Endothelial cell of umbilical vein (primary cell): ENCODE measurements at regions of chr12 and their contacts with region 1.

Region 1: DNA sequence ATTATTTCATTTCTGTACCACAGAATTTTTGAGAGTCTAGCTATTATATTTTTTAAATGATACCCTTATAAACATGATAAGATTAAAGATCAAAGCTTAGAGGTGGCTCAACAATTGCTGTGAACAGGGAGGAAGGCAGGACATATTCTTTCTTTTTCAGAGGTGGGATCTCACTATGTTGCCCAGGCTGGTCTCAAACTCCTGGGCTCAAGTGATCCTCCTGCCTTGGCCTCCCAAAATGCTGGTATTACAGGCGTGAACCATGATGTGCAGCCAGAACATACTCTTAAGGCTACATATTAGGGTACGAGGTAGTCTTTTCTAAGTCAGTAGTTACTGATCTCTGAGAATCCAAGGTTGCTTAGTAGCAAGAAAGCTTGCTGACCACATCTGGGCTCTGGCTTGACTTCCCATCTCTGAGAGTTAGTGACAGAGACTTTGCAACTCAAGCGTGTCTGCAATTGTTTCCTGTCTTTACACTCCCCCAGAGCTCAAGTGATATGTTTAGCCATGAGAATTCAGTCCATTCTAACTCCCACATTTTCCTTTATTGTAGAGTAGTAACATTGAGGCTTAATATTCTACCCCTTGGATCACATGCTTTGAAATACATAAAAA is 8.6 kb downstream of the RAB5B start:
- DNase-seq: no peak
- H3K4me3 ChIP-seq: no peak overlapping the region
- H3K27ac ChIP-seq: no peak overlapping the region
- H3K4me1 ChIP-seq: peaks cover 5% of the 10 kb centered on the region
- H3K27me3 ChIP-seq: no peaks in the 10 kb centered on the region
- CTCF ChIP-seq: no peak
- POLR2A ChIP-seq: no peak

Region 2: DNA sequence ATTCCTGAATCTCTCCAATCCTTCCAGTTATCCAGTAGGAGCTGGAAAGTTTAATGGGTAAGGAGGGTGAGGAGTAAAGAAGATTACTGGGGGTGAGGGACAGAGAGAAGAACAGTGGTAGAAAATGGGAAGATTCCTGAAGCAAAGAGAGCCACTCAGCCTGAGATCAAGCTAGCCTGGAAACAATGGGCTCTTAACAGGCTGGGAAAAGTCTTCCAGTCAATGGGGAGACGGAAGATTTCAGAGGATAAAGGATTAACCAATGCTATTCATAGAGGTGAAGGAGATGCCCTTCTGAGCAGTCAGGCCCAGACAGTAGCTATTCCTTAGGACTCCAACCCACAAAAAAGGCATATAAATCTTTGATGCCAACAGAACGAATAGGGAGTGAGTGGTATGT is 224.7 kb before region 1 on chr12:
- CTCF ChIA-PET with region 1: no interaction called
- POLR2A ChIA-PET with region 1: no interaction called
- dilution Hi-C with region 1: loop called (anchors 10 kb)
- intact Hi-C with region 1: no loop called
- DNase-seq: no peak
- H3K4me3 ChIP-seq: no peak overlapping the region
- H3K27ac ChIP-seq: no peak overlapping the region
- H3K4me1 ChIP-seq: no peaks in the 10 kb centered on the region
- H3K27me3 ChIP-seq: no peaks in the 10 kb centered on the region
- CTCF ChIP-seq: no peak
- POLR2A ChIP-seq: no peak

Region 3: GRCh38 chr12:56020423-56021184 is 38.2 kb after region 1 on chr12 and contains the start of gene IKZF4:
- CTCF ChIA-PET with region 1: no interaction called
- POLR2A ChIA-PET with region 1: no interaction called
- dilution Hi-C with region 1: no loop called
- intact Hi-C with region 1: no loop called
- DNase-seq: no peak
- H3K4me3 ChIP-seq: peak within 1 kb of the TSS in 1 of 3 experiments; percentile 10
- H3K27ac ChIP-seq: no peak within 1 kb of the TSS
- H3K4me1 ChIP-seq: no peaks in the 10 kb centered on the region
- H3K27me3 ChIP-seq: no peaks in the 10 kb centered on the region
- CTCF ChIP-seq: no peak
- POLR2A ChIP-seq: no peak
- total RNA-seq, gene IKZF4: 3.5 and 5.4 TPM in 2 replicates